PC-9 (cell line): ENCODE measurements at regions of chr1 and their contacts with region 1.

Region 1: GRCh38 chr1:211305044-211305443 is 21.6 kb upstream of the TRAF5 start:
- DNase-seq: no peak
- H3K4me3 ChIP-seq: no peak overlapping the region
- H3K27ac ChIP-seq: no peak overlapping the region
- H3K4me1 ChIP-seq: no peaks in the 10 kb centered on the region
- H3K27me3 ChIP-seq: no peaks in the 10 kb centered on the region
- CTCF ChIP-seq: no peak

Region 2: DNA sequence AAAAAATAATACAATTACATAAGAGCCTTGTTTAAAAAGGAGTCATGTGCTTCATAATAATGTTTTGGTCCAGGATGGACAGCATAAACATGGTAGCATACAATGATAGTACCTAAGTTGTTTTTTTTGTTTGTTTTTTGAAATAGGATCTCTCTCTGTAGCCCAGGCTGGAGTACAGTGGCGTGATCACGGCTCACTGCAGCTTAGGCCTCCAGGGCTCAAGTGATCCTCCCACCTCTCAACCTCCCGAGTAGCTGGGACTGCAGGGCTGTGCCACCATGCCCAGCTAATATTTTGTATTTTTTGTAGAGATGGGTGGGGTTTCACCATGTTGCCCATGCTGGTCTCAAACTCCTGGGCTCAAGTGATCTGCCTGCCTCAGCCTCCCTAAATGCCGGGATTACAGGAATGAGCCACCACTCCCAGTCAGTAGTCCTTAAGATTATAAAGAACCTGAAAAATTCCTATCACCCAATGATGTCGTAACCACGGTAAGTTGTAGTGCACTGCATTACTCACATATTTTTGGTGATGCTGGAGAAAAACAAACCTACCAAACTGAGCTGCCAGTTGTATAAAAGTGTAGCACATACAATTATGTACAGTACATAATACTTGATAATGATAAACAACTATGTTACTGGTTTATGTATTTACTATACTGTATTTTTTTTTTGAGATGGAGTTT is 68.3 kb before region 1 on chr1:
- CTCF ChIA-PET with region 1: interaction called, 12 read pairs
- POLR2A ChIA-PET with region 1: no interaction called
- intact Hi-C with region 1: no loop called
- DNase-seq: no peak
- H3K4me3 ChIP-seq: no peak overlapping the region
- H3K27ac ChIP-seq: no peak overlapping the region
- H3K4me1 ChIP-seq: no peaks in the 10 kb centered on the region
- H3K27me3 ChIP-seq: no peaks in the 10 kb centered on the region
- CTCF ChIP-seq: no peak

Region 3: DNA sequence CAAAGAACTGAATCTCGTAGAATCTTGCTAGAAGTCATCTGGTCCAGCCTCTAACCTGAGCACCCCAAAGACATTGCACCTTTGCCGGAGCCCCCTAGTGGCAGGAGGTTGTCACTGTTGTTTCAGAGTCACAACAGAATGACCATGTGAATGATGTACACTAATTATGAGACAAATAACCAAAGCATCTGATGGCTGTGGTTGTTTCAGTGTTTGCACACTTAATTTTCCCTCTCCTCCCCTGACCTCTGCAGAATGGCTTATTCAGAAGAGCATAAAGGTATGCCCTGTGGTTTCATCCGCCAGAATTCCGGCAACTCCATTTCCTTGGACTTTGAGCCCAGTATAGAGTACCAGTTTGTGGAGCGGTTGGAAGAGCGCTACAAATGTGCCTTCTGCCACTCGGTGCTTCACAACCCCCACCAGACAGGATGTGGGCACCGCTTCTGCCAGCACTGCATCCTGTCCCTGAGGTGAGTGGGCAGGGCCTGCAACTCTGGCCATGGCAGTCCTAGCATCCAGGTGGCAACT is 48.0 kb after region 1 on chr1:
- CTCF ChIA-PET with region 1: no interaction called
- POLR2A ChIA-PET with region 1: interaction called, 14 read pairs
- intact Hi-C with region 1: no loop called
- DNase-seq: peak in 1 of 2 experiments; percentile 30
- H3K4me3 ChIP-seq: no peak overlapping the region
- H3K27ac ChIP-seq: no peak overlapping the region
- H3K4me1 ChIP-seq: peaks cover 6% of the 10 kb centered on the region
- H3K27me3 ChIP-seq: no peaks in the 10 kb centered on the region
- CTCF ChIP-seq: peak; percentile 87

Region 4: GRCh38 chr1:211577277-211577825 is 272.3 kb after region 1 on chr1:
- CTCF ChIA-PET with region 1: no interaction called
- POLR2A ChIA-PET with region 1: no interaction called
- intact Hi-C with region 1: no loop called
- DNase-seq: no peak
- H3K4me3 ChIP-seq: peak overlapping the region; percentile 77
- H3K27ac ChIP-seq: peak overlapping the region; percentile 67
- H3K4me1 ChIP-seq: peaks cover 43% of the 10 kb centered on the region
- H3K27me3 ChIP-seq: no peaks in the 10 kb centered on the region
- CTCF ChIP-seq: no peak